ENCODE measurements at regions of chr2 and their contacts with region 1.

Region 1: DNA sequence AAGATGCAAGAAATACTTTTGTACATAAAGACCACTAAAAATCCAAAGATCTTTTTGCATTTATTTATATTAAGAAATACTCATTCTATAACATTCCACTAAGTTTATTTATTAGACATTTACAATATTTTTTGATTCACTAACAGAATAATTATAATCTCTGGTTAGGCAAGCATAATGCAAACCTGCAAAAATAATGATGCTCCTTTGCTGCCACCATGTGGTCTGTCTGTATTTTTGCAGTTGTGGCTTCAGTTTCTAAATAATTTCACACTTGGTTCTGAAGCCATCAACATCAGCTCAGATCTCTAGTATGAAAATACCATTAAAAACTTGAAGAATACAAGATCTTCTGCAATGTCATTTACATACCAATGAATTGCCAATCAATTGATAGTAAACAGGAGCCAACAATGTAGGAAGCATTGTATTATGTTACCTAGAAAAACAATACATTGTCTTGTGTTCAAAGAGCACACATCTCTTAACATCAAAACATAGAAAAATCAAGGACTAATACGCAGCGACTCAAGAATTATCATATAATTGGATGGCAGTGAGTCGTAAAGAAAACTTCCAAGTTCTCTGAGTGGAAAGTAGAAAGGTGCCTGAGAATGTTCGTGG is 28.8 kb upstream of the WDR75 start:
- DNase-seq: peak; percentile 45
- ATAC-seq: no peak
- H3K4me3 Mint-ChIP-seq: no peak overlapping the region
- H3K27ac Mint-ChIP-seq: no peak overlapping the region
- H3K4me1 Mint-ChIP-seq: peaks cover 5% of the 10 kb centered on the region
- H3K27me3 Mint-ChIP-seq: no peaks in the 10 kb centered on the region

Region 2: GRCh38 chr2:189092936-189093335 is 319.5 kb before region 1 on chr2:
- CTCF ChIA-PET with region 1: interaction called, 15 read pairs
- DNase-seq: no peak
- ATAC-seq: no peak
- H3K4me3 Mint-ChIP-seq: no peak overlapping the region
- H3K27ac Mint-ChIP-seq: peak overlapping the region; percentile 9
- H3K4me1 Mint-ChIP-seq: peaks cover 1% of the 10 kb centered on the region
- H3K27me3 Mint-ChIP-seq: no peaks in the 10 kb centered on the region

Region 3: DNA sequence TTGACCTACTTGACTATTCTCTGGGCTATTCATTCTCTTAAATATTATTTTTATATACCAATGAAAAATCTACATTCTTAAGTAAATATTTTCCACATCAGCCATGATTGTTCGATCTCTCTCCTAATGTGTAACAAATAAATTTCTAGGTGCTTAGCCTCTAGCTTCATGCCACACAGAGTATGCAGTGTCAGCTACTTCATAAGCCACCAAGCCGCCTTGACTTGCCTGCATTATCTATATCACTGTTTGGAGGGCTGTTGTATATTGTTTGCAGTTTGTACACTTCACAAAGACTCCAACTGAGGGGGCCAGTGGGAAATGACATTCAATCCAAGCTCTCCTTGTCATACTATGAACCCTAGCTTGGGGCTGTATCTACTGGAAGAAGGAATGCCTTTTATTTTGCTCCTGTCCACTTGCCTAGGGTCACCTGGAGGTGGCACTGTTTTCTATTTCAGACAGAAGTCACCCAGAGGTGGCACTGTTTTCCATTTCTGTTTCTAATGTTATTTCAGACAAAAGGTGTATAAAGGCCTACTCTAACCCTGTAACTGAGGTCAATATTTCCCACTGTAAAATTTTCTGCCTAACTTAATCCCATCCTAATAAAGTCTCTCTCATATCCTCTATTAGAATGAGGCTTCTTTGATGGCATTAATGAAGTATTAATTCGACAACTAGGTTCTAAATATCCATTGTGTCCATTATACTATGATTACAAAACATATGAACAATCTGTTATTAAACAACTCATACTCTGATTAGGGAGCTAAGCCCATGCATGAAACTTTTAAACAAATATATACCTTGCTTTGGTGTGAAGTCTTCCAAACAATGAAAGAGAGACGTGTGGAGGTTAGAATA is 269.3 kb before region 1 on chr2:
- CTCF ChIA-PET with region 1: interaction called, 15 read pairs
- DNase-seq: peak; percentile 56
- ATAC-seq: peak; percentile 51
- H3K4me3 Mint-ChIP-seq: no peak overlapping the region
- H3K27ac Mint-ChIP-seq: no peak overlapping the region
- H3K4me1 Mint-ChIP-seq: no peaks in the 10 kb centered on the region
- H3K27me3 Mint-ChIP-seq: no peaks in the 10 kb centered on the region

Region 4: GRCh38 chr2:189425676-189426075 is 13.2 kb after region 1 on chr2:
- CTCF ChIA-PET with region 1: no interaction called
- DNase-seq: no peak
- ATAC-seq: no peak
- H3K4me3 Mint-ChIP-seq: no peak overlapping the region
- H3K27ac Mint-ChIP-seq: no peak overlapping the region
- H3K4me1 Mint-ChIP-seq: peaks cover 2% of the 10 kb centered on the region
- H3K27me3 Mint-ChIP-seq: no peaks in the 10 kb centered on the region

Measured in activated CD8-positive, alpha-beta memory T cell treated with anti-CD3 and anti-CD28 coated beads, Interleukin-2, amount 10 ng/mL, durations not matched to agents 7 days and 5 days (primary cell).